ENCODE measurements at regions of chr17 and their contacts with region 1.

Region 1: DNA sequence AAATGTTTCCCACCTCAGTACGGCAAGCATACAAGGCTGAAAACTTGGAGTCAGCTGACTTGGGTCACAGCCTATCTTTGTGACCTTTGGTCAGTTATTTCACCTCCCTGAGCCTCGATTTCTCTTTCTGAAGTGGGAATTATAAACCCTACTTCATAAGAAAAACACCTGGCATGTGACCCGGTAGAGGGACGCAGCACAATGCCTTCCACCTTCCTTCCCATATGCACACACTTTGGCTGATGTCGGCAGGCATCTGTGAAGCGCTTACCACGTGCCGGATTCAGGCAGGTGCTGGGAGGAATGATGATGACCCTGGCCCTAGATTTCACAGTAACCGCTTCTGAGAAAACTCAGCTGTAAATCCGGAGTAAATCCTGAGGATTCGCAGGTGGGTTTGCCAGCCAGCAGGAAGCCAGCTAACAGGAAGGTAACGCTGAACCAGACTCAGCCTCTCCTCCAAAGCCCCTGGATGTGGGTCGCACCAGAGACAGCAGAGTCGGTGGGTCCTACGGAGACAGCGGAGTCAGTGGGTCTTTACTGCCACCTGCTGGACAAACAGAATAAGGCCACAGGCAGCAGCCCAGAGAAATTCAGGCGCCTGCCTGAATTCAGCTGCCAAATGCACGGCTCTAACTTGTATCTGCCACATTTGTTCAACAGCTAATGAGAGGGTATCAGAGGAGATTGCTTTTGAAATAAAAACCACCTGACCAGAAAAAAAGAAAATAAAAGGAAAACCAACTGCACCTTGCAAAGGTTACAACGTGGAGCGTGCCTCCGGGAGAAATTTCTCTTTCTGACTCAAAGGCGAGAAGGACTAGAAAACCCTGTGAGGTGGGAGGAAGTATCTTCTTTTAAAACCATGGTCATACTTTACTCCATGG is 16.6 kb downstream of the COPRS start:
- DNase-seq: peak; percentile 53 to 85 (median 70)
- H3K4me3 ChIP-seq: peak overlapping the region in 57 of 59 donors; percentile 12 to 68 (median 43)
- H3K27ac ChIP-seq: peak overlapping the region in 42 of 59 donors; percentile 1 to 79 (median 50)
- H3K27me3 ChIP-seq: no peaks in the 10 kb centered on the region
- CTCF ChIP-seq: peak; percentile 85 to 99 (median 95)

Region 2: GRCh38 chr17:31394544-31394943 is 447.9 kb before region 1 on chr17:
- intact Hi-C with region 1: loop called (anchors 10 kb)
- DNase-seq: peak in 7 of 10 donors; percentile 20 to 77 (median 68)
- H3K4me3 ChIP-seq: peak overlapping the region in 48 of 59 donors; percentile 7 to 86 (median 70)
- H3K27ac ChIP-seq: peak overlapping the region in 24 of 59 donors; percentile 1 to 91 (median 82)
- H3K27me3 ChIP-seq: peaks cover 0 to 6% (median 0%) of the 10 kb centered on the region in 45 donors
- CTCF ChIP-seq: peak in 1 of 56 donors; percentile 15

Region 3: DNA sequence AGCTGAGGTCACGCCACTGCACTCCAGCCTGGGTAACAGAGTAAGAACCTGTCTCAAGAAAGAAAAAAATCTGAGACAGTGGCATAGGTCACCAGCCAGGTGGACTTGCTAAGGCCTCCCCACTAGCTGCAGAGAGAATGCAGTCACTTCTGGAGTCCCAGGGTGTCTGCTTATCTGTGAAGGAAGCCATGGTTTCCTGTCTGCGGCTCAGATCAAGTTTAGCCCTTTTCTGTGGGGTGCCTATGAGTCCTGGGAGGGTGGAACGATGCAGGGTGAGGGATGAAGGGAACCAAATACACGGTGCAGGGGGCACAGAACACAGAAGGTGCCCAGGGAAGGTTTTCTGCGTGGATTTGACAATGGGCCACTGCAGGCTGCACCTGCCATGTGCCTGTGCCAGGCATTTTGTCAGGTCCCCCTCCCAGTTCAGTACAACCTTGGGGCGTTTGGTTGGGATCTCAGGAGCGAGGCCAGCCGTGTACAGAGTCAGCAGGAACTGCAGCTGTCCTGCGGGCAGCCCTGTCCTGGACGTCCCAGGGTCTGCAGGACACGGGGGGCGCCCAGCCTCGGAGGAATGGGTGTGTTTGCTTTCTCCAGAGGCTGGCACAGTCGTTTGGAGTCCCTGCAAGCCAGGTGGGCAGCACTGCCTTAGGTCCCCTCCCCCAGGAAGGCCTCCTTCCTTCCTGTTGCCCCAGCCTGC is 409.2 kb before region 1 on chr17:
- intact Hi-C with region 1: loop called (anchors 5 to 10 kb)
- DNase-seq: no peak
- H3K4me3 ChIP-seq: no peak overlapping the region
- H3K27ac ChIP-seq: peak overlapping the region in 2 of 59 donors; percentile 17 to 41
- H3K27me3 ChIP-seq: no peaks in the 10 kb centered on the region
- CTCF ChIP-seq: no peak

Region 4: DNA sequence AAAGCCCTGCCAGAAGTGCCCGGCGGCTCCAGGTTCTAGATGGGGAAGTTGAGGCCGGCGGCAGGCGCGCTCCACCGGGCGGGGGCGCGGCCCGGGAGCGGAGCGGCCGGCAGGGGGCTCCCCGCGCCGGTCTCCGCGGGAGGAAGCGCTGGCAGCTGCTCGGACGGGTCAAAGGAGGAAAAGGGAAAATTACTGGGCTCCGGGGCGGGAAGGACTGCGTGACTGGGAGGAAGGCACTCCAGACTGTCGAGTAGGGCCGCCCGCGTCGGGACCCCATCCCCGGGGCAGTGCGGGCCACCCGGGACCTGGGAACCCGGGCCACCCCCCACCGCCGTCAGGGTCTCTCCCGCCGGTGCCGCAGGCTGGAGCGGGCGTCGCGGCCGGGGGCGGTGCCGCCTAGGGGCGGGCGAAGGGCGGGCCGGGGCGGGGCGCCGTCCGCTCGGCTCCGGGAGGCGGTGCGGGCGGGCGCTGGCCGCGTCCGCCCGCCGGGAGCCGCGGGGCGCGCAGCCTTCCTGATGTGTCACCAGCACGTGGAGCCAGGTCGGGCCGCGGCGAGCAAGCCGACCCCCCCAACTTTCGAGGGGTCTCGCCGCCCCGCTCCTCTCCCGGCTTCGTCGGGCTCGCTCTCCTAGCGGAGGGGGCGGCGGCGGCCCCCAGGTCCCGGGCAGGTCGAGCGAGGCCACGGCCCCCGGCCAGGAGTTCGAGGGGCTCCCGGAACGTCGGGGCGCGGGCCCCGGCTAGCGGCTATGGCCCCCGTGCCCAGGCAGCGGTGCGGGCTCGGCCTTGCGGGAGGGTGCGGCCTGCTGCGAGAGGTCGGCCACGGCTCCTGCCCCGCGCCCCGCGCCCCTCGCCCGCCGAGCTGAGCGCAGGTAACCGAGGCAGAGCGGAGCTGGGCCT is 283.4 kb before region 1 on chr17:
- intact Hi-C with region 1: loop called (anchors 2 kb)
- DNase-seq: peak in 9 of 10 donors; percentile 40 to 74 (median 49)
- H3K4me3 ChIP-seq: peak overlapping the region; percentile 34 to 80 (median 64)
- H3K27ac ChIP-seq: peak overlapping the region in 51 of 59 donors; percentile 15 to 94 (median 80)
- H3K27me3 ChIP-seq: peaks cover 0 to 10% (median 0%) of the 10 kb centered on the region in 45 donors
- CTCF ChIP-seq: peak; percentile 41 to 97 (median 86)

Region 5: DNA sequence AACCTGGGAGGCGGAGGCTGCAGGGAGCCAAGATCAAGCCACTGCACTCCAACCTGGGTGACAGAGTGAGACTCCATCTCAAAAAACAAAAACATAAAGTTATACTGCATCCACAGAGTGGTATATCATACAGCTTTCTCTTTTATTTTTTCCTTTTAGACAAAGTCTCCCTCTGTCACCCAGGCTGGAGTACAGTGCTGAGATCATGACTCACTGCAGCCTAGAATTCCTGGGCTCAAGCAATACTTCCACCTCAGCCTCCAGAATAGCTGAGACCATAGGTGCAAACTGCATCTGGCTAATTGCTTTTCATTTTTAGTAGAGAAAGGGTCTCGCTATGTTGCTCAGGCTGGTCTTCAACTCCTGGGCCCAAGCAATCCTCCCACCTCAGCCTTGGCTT is 26.6 kb after region 1 on chr17:
- intact Hi-C with region 1: no loop called
- DNase-seq: no peak
- H3K4me3 ChIP-seq: no peak overlapping the region
- H3K27ac ChIP-seq: no peak overlapping the region
- H3K27me3 ChIP-seq: no peaks in the 10 kb centered on the region
- CTCF ChIP-seq: no peak

Region 6: GRCh38 chr17:32006957-32007462 is 164.6 kb after region 1 on chr17 and contains the start of gene LRRC37B:
- intact Hi-C with region 1: no loop called
- DNase-seq: peak; percentile 72 to 92 (median 86)
- H3K4me3 ChIP-seq: peak within 1 kb of the TSS; percentile 64 to 95 (median 80)
- H3K27ac ChIP-seq: peak within 1 kb of the TSS in 58 of 59 donors; percentile 17 to 94 (median 84)
- H3K27me3 ChIP-seq: no peaks in the 10 kb centered on the region
- CTCF ChIP-seq: peak; percentile 72 to 99 (median 92)
- total RNA-seq, gene LRRC37B: 35.2 to 99.1 (median 63.5) TPM